A673 (cell line): ENCODE measurements at regions of chr22 and their contacts with region 1.

Region 1: DNA sequence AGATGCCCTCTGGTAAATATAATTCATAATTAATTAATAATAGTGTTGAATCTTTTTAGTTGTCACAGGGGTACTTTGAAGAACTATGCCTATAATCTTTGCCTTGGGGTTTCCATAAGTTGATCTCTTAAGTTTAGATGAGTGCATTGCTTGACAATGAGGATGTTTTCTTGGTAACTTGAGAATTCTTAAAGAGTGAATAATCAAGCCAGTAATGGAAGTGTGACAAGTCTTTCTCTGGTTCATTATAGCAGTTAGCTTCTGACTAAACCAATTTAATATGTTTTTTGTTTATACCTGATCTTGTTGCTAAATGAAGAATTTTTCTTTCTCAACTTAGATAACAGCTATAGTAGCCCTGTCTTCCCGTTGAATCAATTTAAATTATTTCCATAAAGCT is 46.2 kb downstream of the ATXN10 start:
- DNase-seq: no peak
- H3K4me3 ChIP-seq: no peak overlapping the region
- H3K27ac ChIP-seq: no peak overlapping the region
- H3K4me1 ChIP-seq: peaks cover 6% of the 10 kb centered on the region
- H3K27me3 ChIP-seq: no peaks in the 10 kb centered on the region
- CTCF ChIP-seq: no peak

Region 2: GRCh38 chr22:45397806-45398205 is 320.0 kb before region 1 on chr22:
- CTCF ChIA-PET with region 1: no interaction called
- POLR2A ChIA-PET with region 1: no interaction called
- intact Hi-C with region 1: no loop called
- DNase-seq: no peak
- H3K4me3 ChIP-seq: no peak overlapping the region
- H3K27ac ChIP-seq: no peak overlapping the region
- H3K4me1 ChIP-seq: no peaks in the 10 kb centered on the region
- H3K27me3 ChIP-seq: no peaks in the 10 kb centered on the region
- CTCF ChIP-seq: no peak

Region 3: GRCh38 chr22:45738206-45738605 is 20.4 kb after region 1 on chr22:
- CTCF ChIA-PET with region 1: no interaction called
- POLR2A ChIA-PET with region 1: interaction called, 13 read pairs
- intact Hi-C with region 1: no loop called
- DNase-seq: no peak
- H3K4me3 ChIP-seq: no peak overlapping the region
- H3K27ac ChIP-seq: no peak overlapping the region
- H3K4me1 ChIP-seq: no peaks in the 10 kb centered on the region
- H3K27me3 ChIP-seq: no peaks in the 10 kb centered on the region
- CTCF ChIP-seq: no peak

Region 4: GRCh38 chr22:45804986-45805325 is 87.2 kb after region 1 on chr22:
- CTCF ChIA-PET with region 1: no interaction called
- POLR2A ChIA-PET with region 1: no interaction called
- intact Hi-C with region 1: no loop called
- DNase-seq: peak; percentile 44
- H3K4me3 ChIP-seq: no peak overlapping the region
- H3K27ac ChIP-seq: no peak overlapping the region
- H3K4me1 ChIP-seq: peaks cover 5% of the 10 kb centered on the region
- H3K27me3 ChIP-seq: no peaks in the 10 kb centered on the region
- CTCF ChIP-seq: no peak

Region 5: GRCh38 chr22:45918459-45919370 is 200.9 kb after region 1 on chr22:
- CTCF ChIA-PET with region 1: no interaction called
- POLR2A ChIA-PET with region 1: no interaction called
- intact Hi-C with region 1: no loop called
- DNase-seq: no peak
- H3K4me3 ChIP-seq: no peak overlapping the region
- H3K27ac ChIP-seq: no peak overlapping the region
- H3K4me1 ChIP-seq: no peaks in the 10 kb centered on the region
- H3K27me3 ChIP-seq: no peaks in the 10 kb centered on the region
- CTCF ChIP-seq: no peak

Region 6: GRCh38 chr22:46201059-46201757 is 483.4 kb after region 1 on chr22:
- CTCF ChIA-PET with region 1: no interaction called
- POLR2A ChIA-PET with region 1: no interaction called
- intact Hi-C with region 1: no loop called
- DNase-seq: no peak
- H3K4me3 ChIP-seq: no peak overlapping the region
- H3K27ac ChIP-seq: no peak overlapping the region
- H3K4me1 ChIP-seq: no peaks in the 10 kb centered on the region
- H3K27me3 ChIP-seq: no peaks in the 10 kb centered on the region
- CTCF ChIP-seq: no peak

Region 7: DNA sequence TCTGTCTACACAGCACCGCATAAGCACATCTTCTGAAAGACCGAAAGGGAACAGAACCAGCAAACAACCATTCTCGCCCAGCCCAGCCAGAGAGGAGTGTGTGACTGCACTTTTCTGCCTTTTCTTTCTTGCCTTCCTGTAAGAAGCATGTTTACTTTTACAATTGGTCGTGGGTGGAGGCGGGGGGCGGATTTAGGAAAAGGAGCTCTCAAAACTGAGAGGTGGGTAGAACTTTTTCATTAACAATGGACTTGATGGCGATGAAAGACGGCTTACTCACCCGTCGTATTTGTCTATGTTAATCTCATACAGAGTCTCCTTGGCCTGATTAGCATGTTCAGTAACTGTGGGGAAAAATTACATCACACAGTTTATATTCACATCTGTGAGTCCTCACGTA is 993.0 kb after region 1 on chr22:
- CTCF ChIA-PET with region 1: interaction called, 10 read pairs
- POLR2A ChIA-PET with region 1: no interaction called
- intact Hi-C with region 1: no loop called
- DNase-seq: peak; percentile 42
- H3K4me3 ChIP-seq: no peak overlapping the region
- H3K27ac ChIP-seq: peak overlapping the region; percentile 73
- H3K4me1 ChIP-seq: peaks cover 11% of the 10 kb centered on the region
- H3K27me3 ChIP-seq: no peaks in the 10 kb centered on the region
- CTCF ChIP-seq: no peak